ENCODE measurements at regions of chr7 and their contacts with region 1.

Region 1: GRCh38 chr7:57198801-57199200 is 66.6 kb upstream of the ZNF479 start:
- DNase-seq: no peak
- ATAC-seq: no peak
- H3K4me3 ChIP-seq: no peak overlapping the region
- H3K4me3 Mint-ChIP-seq: no peak overlapping the region
- H3K27ac ChIP-seq: no peak overlapping the region
- H3K27ac Mint-ChIP-seq: no peak overlapping the region
- H3K4me1 ChIP-seq: no peaks in the 10 kb centered on the region
- H3K4me1 Mint-ChIP-seq: no peaks in the 10 kb centered on the region
- H3K27me3 ChIP-seq: no peaks in the 10 kb centered on the region
- H3K27me3 Mint-ChIP-seq: no peaks in the 10 kb centered on the region
- CTCF ChIP-seq: no peak

Region 2: DNA sequence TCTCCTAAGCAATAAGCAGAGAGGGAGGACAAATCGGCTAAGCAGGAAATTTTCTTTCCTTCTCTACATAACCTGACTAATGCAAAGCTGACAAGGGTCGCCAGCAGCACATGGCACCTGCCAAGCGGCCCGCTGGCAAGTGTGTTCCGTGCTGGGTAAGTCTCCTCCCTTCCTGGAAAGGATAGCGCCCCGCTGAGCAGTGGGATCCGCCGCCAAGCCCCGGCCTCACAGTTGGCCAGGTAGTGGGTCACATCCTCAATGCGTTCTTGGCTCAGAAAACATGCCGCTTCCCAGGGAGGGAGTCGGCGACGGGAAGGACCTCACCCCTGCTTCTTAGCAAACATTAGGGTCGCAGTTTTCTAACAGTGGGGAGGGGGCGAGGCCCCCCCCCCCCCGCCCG is 593.7 kb before region 1 on chr7:
- intact Hi-C with region 1: no loop called
- DNase-seq: no peak
- ATAC-seq: no peak
- H3K4me3 ChIP-seq: no peak overlapping the region
- H3K4me3 Mint-ChIP-seq: no peak overlapping the region
- H3K27ac ChIP-seq: no peak overlapping the region
- H3K27ac Mint-ChIP-seq: no peak overlapping the region
- H3K4me1 ChIP-seq: no peaks in the 10 kb centered on the region
- H3K4me1 Mint-ChIP-seq: no peaks in the 10 kb centered on the region
- H3K27me3 ChIP-seq: no peaks in the 10 kb centered on the region
- H3K27me3 Mint-ChIP-seq: no peaks in the 10 kb centered on the region
- CTCF ChIP-seq: no peak

Region 3: DNA sequence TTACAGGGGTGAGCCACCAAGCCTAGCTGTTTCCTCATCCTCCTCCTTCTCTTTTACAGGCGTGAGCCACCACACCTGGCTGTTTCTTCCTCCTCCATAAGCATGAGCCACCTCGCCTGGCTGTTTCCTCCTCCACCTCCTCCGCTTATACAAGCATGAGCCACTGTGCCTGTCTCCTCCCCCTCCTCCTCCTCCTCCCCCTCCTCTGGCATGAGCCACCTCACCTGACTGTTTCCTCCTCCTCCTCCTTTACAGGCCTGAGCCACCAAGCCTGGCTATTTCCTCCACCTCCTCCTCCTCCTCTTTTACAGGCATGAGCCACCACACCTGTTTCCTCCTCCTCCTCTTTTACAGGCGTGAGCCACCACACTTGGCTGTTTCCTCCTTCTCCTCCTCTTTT is 16.8 kb before region 1 on chr7:
- intact Hi-C with region 1: loop called (anchors 2 kb)
- DNase-seq: no peak
- ATAC-seq: no peak
- H3K4me3 ChIP-seq: no peak overlapping the region
- H3K4me3 Mint-ChIP-seq: no peak overlapping the region
- H3K27ac ChIP-seq: no peak overlapping the region
- H3K27ac Mint-ChIP-seq: no peak overlapping the region
- H3K4me1 ChIP-seq: no peaks in the 10 kb centered on the region
- H3K4me1 Mint-ChIP-seq: no peaks in the 10 kb centered on the region
- H3K27me3 ChIP-seq: no peaks in the 10 kb centered on the region
- H3K27me3 Mint-ChIP-seq: no peaks in the 10 kb centered on the region
- CTCF ChIP-seq: no peak